ENCODE measurements at regions of chr5 and their contacts with region 1.

Region 1: GRCh38 chr5:1167728-1168709 is 33.4 kb upstream of the SLC6A19 start:
- H3K4me3 ChIP-seq: peak overlapping the region; percentile 29
- H3K27ac ChIP-seq: no peak overlapping the region
- H3K4me1 ChIP-seq: no peaks in the 10 kb centered on the region
- CTCF ChIP-seq: peak; percentile 61

Region 2: DNA sequence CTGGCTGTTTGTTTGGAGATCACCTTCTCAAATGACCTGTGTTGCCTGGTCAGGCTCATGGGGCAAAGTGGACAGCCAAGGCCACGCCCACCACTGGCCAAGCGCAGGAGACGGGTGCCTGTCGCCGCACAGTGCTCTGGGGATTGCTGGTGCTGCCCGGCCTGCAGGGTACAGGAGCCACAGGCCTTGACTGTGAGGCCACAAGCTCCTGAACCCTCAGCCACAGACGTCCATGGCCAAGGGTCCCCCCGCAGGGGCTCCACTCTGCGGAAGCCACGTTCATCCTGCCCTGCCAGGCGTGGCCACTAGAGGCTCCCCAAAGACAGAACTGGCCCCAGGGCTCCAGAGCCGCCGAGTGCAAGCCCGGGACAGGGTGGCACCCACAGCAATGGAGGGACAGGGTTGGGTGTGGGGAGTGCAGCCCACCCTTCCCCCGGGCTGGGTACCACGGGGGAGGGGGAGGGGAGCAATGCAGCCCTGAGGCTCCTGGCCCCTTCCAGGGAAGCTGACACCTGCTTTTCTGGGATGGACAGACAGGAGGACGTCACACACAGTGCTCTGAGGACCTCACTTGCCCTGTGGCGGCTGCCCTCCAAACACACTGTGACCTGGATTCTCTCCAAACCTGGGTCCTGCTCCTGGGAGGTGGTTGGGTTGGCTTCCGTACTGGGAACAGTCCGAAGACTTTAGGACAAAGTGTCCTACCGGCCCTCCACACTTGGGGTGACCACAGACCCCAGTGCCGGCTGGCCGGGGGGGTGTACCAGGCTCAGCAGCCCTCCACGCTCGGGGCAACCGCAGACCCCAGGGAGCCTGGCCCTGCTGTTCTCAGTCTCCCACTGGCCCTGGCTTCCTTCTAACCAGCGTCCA is 496.3 kb before region 1 on chr5:
- CTCF ChIA-PET with region 1: interaction called, 13 read pairs
- POLR2A ChIA-PET with region 1: no interaction called
- H3K4me3 ChIP-seq: no peak overlapping the region
- H3K27ac ChIP-seq: no peak overlapping the region
- H3K4me1 ChIP-seq: peaks cover 19% of the 10 kb centered on the region
- CTCF ChIP-seq: peak; percentile 86

Region 3: DNA sequence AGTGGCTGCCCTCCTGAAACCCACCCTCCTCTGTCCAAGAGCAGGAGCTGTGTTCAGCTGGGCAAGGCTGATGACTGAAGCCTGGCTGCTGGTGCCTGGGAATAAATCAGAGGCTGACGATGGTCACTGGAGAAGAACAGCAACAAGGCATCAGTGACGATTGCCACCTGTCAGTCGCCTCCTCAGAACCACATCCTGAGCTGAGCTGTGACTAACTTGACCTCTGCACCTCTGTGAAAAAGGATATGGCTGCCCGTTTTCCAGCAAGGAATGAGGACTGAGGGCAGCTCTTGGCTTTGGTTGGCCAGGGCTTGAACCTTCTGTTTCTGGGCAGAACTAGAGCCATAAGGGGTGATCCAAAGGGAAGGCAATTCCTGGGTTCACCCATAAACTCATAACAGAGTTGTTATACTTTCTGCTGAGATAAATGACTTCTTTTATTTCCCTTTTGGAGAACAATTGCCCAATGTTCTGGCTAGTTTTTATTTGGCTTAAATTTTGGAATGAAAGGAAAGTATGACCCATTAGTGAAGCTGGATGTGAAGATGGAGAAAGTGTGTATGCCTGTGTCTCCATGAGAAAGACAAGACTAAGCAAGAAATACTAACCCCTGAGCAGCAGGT is 235.3 kb before region 1 on chr5:
- CTCF ChIA-PET with region 1: interaction called, 31 read pairs
- POLR2A ChIA-PET with region 1: no interaction called
- H3K4me3 ChIP-seq: no peak overlapping the region
- H3K27ac ChIP-seq: no peak overlapping the region
- H3K4me1 ChIP-seq: no peaks in the 10 kb centered on the region
- CTCF ChIP-seq: no peak

Region 4: DNA sequence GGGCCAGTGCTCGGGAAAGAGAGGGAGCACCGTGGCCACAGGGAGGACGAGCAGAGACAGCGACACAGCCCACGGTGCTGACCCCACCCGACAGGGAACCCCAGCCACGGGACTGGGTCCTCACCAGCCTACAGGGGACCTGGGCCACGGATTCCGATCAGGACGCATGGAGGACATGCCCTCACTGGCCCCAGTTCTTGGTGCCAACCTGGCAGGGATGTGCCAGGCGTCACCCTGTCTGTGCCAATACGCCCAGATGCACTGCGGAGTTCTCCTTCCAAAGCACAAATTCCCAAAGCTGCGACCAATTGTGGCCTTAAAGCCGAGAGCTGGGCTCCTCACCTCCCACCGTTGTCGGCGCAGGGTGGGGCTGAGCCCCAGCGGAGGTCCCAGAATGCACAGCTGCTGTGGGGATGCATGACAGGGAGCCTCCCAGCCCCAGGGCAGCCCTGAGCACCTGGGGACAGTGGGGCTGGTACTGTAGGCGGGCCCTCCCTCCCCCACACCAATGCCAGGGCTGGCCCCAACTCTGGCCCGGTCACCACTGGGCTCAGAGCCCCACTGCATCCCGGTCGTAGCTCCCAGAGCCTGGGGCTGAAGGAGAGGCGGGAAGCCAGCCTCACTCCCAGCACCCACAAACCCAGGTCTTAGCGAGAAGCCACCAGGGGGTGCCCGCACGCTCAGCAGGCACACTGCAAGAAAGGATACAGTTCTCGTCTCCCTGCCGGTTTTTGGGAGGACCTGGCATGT is 115.2 kb before region 1 on chr5:
- CTCF ChIA-PET with region 1: interaction called, 13 read pairs
- POLR2A ChIA-PET with region 1: no interaction called
- H3K4me3 ChIP-seq: no peak overlapping the region
- H3K27ac ChIP-seq: no peak overlapping the region
- H3K4me1 ChIP-seq: no peaks in the 10 kb centered on the region
- CTCF ChIP-seq: 0 out of 2 replicates have a peak, but pooled peaks have one; percentile 11

Region 5: GRCh38 chr5:1140171-1140817 is 27.7 kb before region 1 on chr5:
- CTCF ChIA-PET with region 1: interaction called, 26 read pairs
- POLR2A ChIA-PET with region 1: no interaction called
- H3K4me3 ChIP-seq: no peak overlapping the region
- H3K27ac ChIP-seq: no peak overlapping the region
- H3K4me1 ChIP-seq: no peaks in the 10 kb centered on the region
- CTCF ChIP-seq: peak; percentile 87

Region 6: DNA sequence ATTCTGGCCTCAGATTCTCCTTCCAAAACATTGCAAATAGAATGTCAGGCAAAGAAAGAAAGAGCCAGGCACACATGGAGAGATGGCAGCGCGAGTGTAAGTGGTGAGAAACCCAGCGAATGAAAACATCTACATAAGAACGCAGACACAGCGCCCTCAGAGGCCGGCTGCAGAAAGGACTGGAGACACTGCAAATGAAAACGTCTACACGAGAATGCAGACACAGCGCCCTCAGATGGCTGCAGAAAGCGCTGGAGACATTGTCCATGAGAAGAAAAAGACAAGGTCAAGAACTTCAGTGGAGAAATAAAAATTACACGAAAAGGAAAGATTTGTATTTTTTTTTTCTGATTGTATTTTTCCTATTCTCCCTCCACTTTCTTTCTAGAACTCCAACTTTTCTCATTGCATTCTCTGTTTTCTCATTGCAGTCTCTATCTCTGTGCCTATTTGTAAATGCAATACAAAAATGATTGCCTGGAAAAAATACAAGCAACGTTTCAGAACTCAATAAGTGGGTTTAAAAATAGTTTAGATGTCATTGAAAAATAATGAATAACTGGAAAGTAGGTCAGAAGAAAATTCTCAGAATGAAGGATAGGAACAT is 473.6 kb after region 1 on chr5:
- CTCF ChIA-PET with region 1: interaction called, 62 read pairs
- POLR2A ChIA-PET with region 1: no interaction called
- H3K4me3 ChIP-seq: no peak overlapping the region; the same call in 1 of the 2 replicates
- H3K27ac ChIP-seq: no peak overlapping the region
- H3K4me1 ChIP-seq: no peaks in the 10 kb centered on the region; the same call in 1 of the 2 replicates
- CTCF ChIP-seq: peak; percentile 91

Measured in HEK293 (cell line).